AG04449 (cell line): ENCODE measurements at regions of chr16 and their contacts with region 1.

Region 1: DNA sequence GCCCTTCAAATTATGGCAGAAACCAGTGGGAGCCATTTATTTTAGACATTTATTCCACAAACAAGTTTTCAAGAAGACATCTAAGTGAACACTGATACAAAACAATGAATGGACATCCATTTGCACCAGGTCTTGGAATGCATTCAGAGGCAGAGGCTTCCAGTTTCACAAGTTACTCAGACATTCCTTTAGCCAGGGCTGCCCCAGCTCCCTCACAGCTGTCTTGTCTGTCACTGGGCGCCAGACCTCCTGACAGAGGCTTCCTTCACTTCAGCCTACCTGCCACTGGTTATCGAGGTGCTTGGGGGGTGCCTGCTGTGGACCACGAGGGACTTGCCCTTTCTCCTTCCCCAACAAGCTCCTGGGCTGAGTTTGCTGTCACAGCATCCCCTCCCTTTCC is 19.2 kb downstream of the AQP8 start:
- DNase-seq: peak; percentile 9
- H3K4me3 ChIP-seq: no peak overlapping the region
- CTCF ChIP-seq: no peak

Region 2: DNA sequence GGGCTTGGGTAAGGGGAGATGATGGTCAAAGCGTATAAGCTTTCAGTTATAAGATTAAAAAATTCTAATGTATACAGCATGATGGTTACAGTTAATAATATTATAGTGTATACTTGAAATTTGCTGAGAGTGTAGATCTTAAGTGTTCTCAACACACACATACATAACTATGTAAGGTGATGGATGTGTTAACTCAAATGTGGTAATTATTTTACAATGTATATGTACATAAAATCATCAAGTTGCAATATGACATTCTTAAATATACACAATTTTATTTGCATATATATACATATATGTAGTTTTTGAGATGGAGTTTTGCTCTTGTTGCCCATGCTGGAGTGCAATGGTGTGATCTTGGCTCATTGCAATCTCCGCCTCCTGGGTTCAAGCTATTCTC is 14.5 kb after region 1 on chr16:
- CTCF ChIA-PET with region 1: interaction called, 11 read pairs
- POLR2A ChIA-PET with region 1: no interaction called
- DNase-seq: no peak
- H3K4me3 ChIP-seq: no peak overlapping the region
- CTCF ChIP-seq: no peak

Region 3: DNA sequence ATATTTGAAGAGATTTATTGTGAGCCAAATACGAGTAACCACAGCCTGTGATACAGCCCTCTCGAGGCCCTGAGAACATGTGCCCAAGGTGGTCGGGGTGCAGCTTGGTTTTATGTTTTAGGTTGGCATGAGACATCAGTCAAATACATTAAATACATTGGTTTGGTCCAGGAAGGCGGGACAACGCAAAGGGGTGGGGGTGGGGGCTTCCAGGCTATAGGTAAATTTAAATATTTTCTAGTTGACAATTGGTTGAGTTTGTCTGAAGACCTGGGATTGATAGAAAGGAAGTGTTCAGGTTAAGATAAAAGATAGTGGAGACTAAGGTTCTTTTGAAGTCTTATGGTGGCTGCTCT is 22.8 kb after region 1 on chr16:
- CTCF ChIA-PET with region 1: interaction called, 12 read pairs
- POLR2A ChIA-PET with region 1: no interaction called
- DNase-seq: no peak
- H3K4me3 ChIP-seq: peak overlapping the region; percentile 83
- CTCF ChIP-seq: no peak